ENCODE measurements at regions of chr20 and their contacts with region 1.

Region 1: DNA sequence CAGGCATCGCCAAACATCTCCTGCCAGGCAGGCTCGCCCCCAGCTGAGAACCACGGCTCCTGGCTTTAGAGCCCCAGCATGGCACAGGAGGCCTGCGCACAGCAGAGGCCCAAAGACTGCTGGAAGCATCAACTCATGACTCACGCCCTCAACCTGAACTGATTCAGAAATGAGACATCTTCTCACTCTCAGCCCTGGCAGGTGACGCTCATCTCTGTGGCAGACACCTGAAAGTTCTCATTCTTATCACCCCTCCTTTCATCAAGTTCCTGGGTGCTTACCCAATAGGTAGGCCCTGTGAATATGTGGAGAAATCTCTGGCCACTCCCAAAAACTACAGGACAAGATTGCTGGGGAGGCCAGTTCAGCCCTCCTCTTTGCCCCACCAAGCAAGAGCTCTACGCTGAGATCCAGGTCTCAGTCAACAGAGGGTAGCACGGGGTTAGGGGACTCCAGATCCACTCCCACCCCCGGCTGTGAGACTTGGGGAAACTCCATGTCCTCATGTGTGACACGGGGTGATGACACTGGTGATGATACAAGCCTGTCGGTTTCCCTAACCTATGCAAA is 11.3 kb downstream of the NFATC2 start:
- DNase-seq: peak; percentile 68 to 96
- H3K4me3 ChIP-seq: no peak overlapping the region
- H3K27ac ChIP-seq: peak overlapping the region; percentile 89
- H3K4me1 ChIP-seq: peaks cover 42% of the 10 kb centered on the region
- H3K27me3 ChIP-seq: no peaks in the 10 kb centered on the region
- CTCF ChIP-seq: no peak

Region 2: GRCh38 chr20:51372176-51372803 is 158.9 kb before region 1 on chr20:
- CTCF ChIA-PET with region 1: no interaction called
- POLR2A ChIA-PET with region 1: no interaction called
- intact Hi-C with region 1: loop called (anchors 5 kb)
- DNase-seq: peak; percentile 52 to 76
- H3K4me3 ChIP-seq: no peak overlapping the region
- H3K27ac ChIP-seq: no peak overlapping the region
- H3K4me1 ChIP-seq: peaks cover 7% of the 10 kb centered on the region
- H3K27me3 ChIP-seq: no peaks in the 10 kb centered on the region
- CTCF ChIP-seq: peak; percentile 92

Region 3: GRCh38 chr20:51385646-51386530 is 145.3 kb before region 1 on chr20:
- CTCF ChIA-PET with region 1: interaction called, 4 read pairs
- POLR2A ChIA-PET with region 1: no interaction called
- intact Hi-C with region 1: loop called (anchors 5 kb)
- DNase-seq: peak in 1 of 2 experiments; percentile 16
- H3K4me3 ChIP-seq: no peak overlapping the region
- H3K27ac ChIP-seq: no peak overlapping the region
- H3K4me1 ChIP-seq: peaks cover 21% of the 10 kb centered on the region
- H3K27me3 ChIP-seq: no peaks in the 10 kb centered on the region
- CTCF ChIP-seq: peak; percentile 73

Region 4: DNA sequence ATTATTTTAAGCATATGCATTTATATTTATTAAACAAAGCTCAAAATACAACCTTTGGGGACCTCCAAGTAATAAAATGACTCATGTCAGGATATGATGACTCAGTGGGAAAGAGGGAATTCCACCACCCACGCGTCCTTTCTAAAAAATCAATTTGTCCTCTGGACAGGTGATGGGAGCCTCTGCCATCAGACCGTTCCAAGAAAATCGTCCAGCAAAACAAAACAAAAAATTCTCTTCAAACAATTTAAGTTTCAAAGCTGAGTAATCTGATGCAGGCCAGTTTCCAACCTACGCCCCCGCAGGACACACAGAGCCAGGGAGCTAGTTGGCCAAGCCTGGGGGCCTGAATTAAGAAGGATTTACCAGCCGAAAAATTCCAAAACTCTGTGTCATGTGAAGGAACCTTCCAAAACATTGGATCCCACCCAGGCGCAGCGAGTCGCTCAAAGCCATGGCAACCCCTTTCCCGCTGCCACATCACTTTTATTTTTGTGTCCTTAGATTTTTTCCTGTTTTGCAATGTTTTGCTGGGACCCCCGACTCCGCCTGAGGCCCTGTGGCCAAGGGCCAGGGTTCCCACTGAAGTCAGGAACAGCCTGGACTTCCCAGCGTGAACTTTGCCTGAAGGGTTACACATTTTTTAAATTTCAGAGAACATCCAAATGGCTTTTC is 84.0 kb before region 1 on chr20:
- CTCF ChIA-PET with region 1: no interaction called
- POLR2A ChIA-PET with region 1: no interaction called
- intact Hi-C with region 1: loop called (anchors 1 kb)
- DNase-seq: peak; percentile 78 to 93
- H3K4me3 ChIP-seq: peak overlapping the region; percentile 16; the same call in 1 of the 2 replicates
- H3K27ac ChIP-seq: peak overlapping the region; percentile 76
- H3K4me1 ChIP-seq: peaks cover 28% of the 10 kb centered on the region
- H3K27me3 ChIP-seq: no peaks in the 10 kb centered on the region
- CTCF ChIP-seq: 0 out of 2 replicates have a peak, but pooled peaks have one; percentile 16

Region 5: GRCh38 chr20:51456511-51457509 is 74.4 kb before region 1 on chr20:
- CTCF ChIA-PET with region 1: interaction called, 8 read pairs
- POLR2A ChIA-PET with region 1: no interaction called
- intact Hi-C with region 1: loop called (anchors 2 kb)
- DNase-seq: peak; percentile 93 to 100
- H3K4me3 ChIP-seq: peak overlapping the region; percentile 51; the same call in 1 of the 2 replicates
- H3K27ac ChIP-seq: peak overlapping the region; percentile 84
- H3K4me1 ChIP-seq: peaks cover 26% of the 10 kb centered on the region
- H3K27me3 ChIP-seq: no peaks in the 10 kb centered on the region
- CTCF ChIP-seq: no peak

Region 6: GRCh38 chr20:51487565-51488268 is 43.5 kb before region 1 on chr20:
- CTCF ChIA-PET with region 1: interaction called, 6 read pairs
- POLR2A ChIA-PET with region 1: no interaction called
- intact Hi-C with region 1: loop called (anchors 5 kb)
- DNase-seq: peak; percentile 81 to 93
- H3K4me3 ChIP-seq: peak overlapping the region; percentile 57
- H3K27ac ChIP-seq: peak overlapping the region; percentile 92
- H3K4me1 ChIP-seq: peaks cover 24% of the 10 kb centered on the region
- H3K27me3 ChIP-seq: no peaks in the 10 kb centered on the region
- CTCF ChIP-seq: no peak; the same call in 1 of the 2 replicates

Region 7: DNA sequence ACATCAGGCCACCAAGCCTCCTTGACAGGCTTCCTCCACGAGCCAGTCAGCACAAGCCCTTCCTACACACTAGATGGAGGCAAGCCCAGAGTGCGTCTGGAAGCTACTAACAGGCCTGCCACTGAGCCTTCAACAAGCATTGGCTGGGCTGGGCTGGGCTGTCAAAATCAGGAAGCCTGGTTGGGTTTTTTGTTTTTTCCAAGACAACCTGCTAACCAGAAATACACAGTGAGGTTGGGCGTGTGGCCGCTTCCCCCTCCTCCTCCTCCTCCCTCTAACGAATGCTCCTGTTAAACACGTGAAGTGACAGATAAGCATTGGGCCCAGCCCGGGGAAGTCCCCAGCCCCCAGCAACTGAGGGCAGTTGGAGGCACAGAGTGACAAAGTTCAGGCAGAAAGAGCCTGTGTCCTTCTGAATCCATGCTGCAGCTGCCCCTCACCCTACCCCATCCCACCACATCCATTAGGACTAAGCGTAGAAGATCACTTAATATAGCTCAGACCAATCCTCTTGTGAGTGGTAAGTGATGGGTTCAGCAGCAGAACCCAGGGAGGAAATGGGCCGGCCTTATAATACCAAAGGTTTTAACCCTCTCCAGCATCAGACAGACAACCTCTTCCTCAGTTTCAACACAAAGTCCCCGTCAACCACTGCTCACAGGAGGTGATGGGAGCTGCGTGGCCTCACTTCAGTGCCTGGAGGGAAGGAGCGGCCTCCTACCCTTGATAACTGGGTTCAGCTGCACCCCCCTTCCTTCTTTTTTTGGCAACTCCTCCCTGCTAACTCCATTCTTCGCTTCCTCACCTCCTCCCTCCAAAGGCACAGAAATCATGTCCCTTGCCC is 10.2 kb after region 1 on chr20:
- CTCF ChIA-PET with region 1: no interaction called
- POLR2A ChIA-PET with region 1: no interaction called
- intact Hi-C with region 1: loop called (anchors 1 kb)
- DNase-seq: peak in 1 of 2 experiments; percentile 35
- H3K4me3 ChIP-seq: peak overlapping the region; percentile 90
- H3K27ac ChIP-seq: no peak overlapping the region
- H3K4me1 ChIP-seq: peaks cover 12% of the 10 kb centered on the region
- H3K27me3 ChIP-seq: peaks cover 22% of the 10 kb centered on the region
- CTCF ChIP-seq: no peak

Measured in PC-9 (cell line).